Activated naive CD4-positive, alpha-beta T cell treated with anti-CD3 and anti-CD28 coated beads for 36 hours (primary cell): ENCODE measurements at regions of chr6 and their contacts with region 1.

Region 1: DNA sequence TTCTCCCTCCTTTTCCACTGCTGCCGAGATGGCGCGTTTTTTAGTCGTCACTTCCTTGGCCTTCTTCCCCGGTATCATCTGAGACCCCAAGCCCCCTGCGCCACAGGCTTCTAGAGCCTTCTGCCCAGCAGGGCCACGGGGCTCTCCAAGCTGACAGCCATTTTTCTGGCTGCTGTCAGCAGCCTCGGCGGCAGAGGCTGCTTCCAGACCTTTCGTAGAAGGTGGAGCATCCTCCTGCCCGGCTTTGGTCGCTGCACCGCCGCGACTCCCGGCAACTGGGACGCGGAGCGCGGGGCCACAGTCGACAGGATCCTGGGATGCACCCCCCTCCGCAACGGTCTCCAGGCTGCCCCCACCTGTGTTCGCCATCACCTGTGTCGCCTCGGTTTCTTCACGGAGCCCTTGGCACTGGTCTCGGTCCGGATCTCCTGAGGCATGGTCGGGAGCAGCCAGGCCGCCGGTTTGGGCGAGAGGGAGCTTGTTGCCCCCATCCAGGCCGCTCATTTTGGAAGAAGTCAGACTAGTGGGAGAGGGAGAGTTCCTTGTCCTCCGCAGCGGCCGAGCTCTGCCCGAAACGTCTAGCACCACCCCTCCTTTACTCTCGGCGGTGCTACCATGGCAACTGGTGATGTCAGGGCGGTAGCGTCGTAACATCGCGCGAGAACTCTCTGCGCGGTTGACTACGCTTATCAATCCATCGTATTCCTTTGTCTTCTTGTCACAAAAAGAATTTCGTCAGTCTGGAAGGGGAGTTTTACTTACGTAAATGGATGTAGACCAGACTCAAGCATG is at the start of gene TSPYL4:
- DNase-seq: peak; percentile 95
- H3K4me3 Mint-ChIP-seq: no peak within 1 kb of the TSS
- H3K27ac Mint-ChIP-seq: no peak within 1 kb of the TSS
- H3K4me1 Mint-ChIP-seq: peaks cover 35% of the 10 kb centered on the region
- H3K27me3 Mint-ChIP-seq: no peaks in the 10 kb centered on the region
- total RNA-seq, gene TSPYL4: 7.8 to 8.0 TPM

Region 2: GRCh38 chr6:116217069-116217468 is 36.6 kb before region 1 on chr6:
- CTCF ChIA-PET with region 1: no interaction called
- intact Hi-C with region 1: loop called (anchors 1 kb)
- DNase-seq: no peak
- H3K4me3 Mint-ChIP-seq: no peak overlapping the region
- H3K27ac Mint-ChIP-seq: no peak overlapping the region
- H3K4me1 Mint-ChIP-seq: peaks cover 4% of the 10 kb centered on the region
- H3K27me3 Mint-ChIP-seq: no peaks in the 10 kb centered on the region

Region 3: DNA sequence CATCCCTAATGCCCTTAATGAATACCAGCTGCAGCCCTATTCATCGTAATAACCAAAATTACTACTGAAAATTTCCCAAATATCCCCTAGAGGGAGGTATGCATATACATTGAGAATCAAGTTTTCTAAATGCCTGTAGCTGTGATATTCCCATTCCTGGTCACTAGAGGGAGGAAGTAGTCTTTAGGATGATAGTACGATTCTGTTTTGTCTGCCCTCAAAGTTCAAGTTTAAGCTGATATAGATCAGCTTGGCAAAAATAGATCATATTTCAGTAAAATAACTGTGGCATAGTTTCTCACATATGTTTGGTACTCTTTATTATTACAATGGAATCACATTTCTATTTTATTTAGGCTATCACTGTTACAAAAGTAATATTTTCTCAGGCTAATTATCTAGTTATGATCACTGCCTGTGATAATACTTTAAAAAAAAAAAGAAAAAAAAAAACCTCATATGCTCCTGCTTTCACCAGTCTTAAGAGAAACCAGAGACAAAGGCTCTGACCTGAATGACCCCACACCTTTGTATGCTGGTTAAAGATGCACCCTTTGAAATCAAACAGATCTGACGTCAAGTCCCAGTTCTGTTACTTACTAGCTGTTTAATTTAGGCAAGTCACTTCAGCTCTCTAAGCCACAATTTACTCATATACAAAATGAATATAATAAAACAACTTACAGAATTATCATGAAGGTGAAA is 15.0 kb after region 1 on chr6:
- CTCF ChIA-PET with region 1: interaction called, 22 read pairs
- intact Hi-C with region 1: loop called (anchors 2 kb)
- DNase-seq: no peak
- H3K4me3 Mint-ChIP-seq: no peak overlapping the region
- H3K27ac Mint-ChIP-seq: no peak overlapping the region
- H3K4me1 Mint-ChIP-seq: peaks cover 27% of the 10 kb centered on the region
- H3K27me3 Mint-ChIP-seq: no peaks in the 10 kb centered on the region

Region 4: GRCh38 chr6:116371120-116371917 is 117.6 kb after region 1 on chr6:
- CTCF ChIA-PET with region 1: no interaction called
- intact Hi-C with region 1: loop called (anchors 1 kb)
- DNase-seq: peak; percentile 43
- H3K4me3 Mint-ChIP-seq: peak overlapping the region; percentile 71
- H3K27ac Mint-ChIP-seq: no peak overlapping the region
- H3K4me1 Mint-ChIP-seq: peaks cover 8% of the 10 kb centered on the region
- H3K27me3 Mint-ChIP-seq: peaks cover 24% of the 10 kb centered on the region

Region 5: GRCh38 chr6:116570856-116571682 is 317.4 kb after region 1 on chr6 and contains the start of gene RWDD1:
- CTCF ChIA-PET with region 1: no interaction called
- intact Hi-C with region 1: loop called (anchors 1 kb)
- DNase-seq: peak; percentile 99
- H3K4me3 Mint-ChIP-seq: peak within 1 kb of the TSS; percentile 93
- H3K27ac Mint-ChIP-seq: peak within 1 kb of the TSS; percentile 88
- H3K4me1 Mint-ChIP-seq: peaks cover 49% of the 10 kb centered on the region
- H3K27me3 Mint-ChIP-seq: no peaks in the 10 kb centered on the region
- total RNA-seq, gene RWDD1: 47.8 to 50.3 TPM

Region 6: DNA sequence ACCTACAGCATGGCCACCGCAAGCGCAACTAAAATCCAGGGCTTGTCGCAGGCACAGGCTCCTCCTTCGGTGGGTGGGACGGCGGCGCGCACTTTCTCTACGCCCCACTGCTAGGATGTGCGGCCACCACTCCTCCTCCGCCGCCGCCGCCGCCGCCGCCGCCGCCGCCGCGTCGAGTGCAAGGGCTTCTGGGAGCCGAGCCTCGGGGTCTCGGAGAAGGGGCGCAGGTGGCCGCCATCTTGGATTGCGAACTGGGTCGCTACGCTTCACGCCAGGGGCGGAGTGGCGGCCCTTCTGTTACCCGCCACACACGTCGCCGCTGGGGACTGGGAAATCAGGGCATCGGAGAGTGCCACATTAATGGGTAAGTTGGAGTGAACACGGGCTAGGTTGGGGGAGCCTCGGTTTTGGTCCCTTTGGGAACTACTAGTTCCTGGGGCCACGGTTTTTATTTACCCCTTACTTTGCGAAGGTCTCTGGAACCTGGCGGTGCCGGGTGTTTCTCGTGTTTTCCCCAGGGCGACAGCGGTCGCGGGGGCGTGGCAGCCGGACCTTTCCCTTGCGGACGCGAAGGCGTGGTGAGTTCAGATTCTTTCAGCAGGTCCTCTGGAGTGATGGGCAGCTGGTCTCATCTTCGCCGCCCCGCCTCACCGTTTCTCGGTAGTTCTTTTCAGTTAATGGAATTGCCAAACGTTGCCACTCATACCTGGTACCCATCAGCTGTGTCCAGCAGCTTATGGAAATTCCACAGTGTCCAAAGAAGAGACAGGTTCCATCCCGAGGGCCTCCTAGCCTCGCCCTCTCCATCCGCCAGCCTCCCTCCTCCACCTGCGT is 427.5 kb after region 1 on chr6 and contains the start of gene KPNA5:
- CTCF ChIA-PET with region 1: no interaction called
- intact Hi-C with region 1: loop called (anchors 1 kb)
- DNase-seq: peak; percentile 94
- H3K4me3 Mint-ChIP-seq: peak within 1 kb of the TSS; percentile 96
- H3K27ac Mint-ChIP-seq: peak within 1 kb of the TSS; percentile 97
- H3K4me1 Mint-ChIP-seq: peaks cover 43% of the 10 kb centered on the region
- H3K27me3 Mint-ChIP-seq: no peaks in the 10 kb centered on the region
- total RNA-seq, gene KPNA5: 8.4 to 8.9 TPM

Region 7: DNA sequence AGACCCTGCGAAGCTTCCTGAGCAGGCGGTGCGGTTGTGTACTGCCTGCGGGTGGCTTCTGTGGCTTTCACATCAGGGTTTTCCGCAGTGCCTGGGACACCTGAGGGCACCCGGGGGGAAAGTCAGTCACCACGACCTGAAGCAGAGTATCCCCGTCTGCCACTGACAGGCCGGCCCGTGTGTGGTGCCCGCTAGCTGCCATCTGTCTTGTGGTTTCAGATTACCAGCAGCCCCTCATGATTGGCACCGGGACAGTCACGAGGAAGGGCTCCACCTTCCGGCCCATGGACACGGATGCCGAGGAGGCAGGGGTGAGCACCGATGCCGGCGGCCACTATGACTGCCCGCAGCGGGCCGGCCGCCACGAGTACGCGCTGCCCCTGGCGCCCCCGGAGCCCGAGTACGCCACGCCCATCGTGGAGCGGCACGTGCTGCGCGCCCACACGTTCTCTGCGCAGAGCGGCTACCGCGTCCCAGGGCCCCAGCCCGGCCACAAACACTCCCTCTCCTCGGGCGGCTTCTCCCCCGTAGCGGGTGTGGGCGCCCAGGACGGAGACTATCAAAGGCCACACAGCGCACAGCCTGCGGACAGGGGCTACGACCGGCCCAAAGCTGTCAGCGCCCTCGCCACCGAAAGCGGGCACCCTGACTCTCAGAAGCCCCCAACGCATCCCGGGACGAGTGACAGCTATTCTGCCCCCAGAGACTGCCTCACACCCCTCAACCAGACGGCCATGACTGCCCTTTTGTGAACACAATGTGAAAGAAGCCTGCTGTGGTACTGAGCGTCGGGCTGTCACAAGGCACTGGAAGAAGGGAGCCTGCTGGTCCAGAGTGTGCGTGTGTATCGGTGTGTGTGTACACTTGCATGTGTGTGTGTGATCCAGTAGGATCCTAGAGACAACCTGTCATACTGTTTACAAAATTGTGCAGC is 1294.3 kb after region 1 on chr6:
- CTCF ChIA-PET with region 1: no interaction called
- intact Hi-C with region 1: loop called (anchors 10 kb)
- DNase-seq: peak; percentile 52
- H3K4me3 Mint-ChIP-seq: peak overlapping the region; percentile 67
- H3K27ac Mint-ChIP-seq: no peak overlapping the region
- H3K4me1 Mint-ChIP-seq: peaks cover 37% of the 10 kb centered on the region
- H3K27me3 Mint-ChIP-seq: peaks cover 6% of the 10 kb centered on the region